MCF 10A (cell line): ENCODE measurements at regions of chr10 and their contacts with region 1.

Region 1: DNA sequence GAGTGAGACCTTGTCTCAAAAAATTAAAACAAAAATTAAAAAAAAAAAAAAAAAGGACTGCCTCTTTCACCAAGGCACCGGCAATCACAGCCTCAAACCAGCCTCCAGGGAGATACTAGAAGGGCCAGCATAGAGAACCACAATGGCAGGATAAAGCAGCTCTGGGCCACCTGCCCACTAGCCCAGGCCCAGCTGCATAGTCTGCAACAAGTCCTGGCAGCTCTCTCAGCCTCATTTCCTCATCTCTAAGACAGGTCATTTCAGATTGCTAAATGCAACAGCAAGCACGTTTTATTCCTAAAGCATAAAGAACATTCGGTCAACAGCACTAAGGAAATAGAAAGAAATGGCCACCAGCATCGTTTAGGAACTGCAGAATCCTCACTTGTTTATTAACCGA is 28.8 kb downstream of the XPNPEP1 start:
- DNase-seq: peak; percentile 90
- H3K4me3 Mint-ChIP-seq: peak overlapping the region; percentile 31
- H3K27ac Mint-ChIP-seq: peak overlapping the region; percentile 83
- H3K4me1 Mint-ChIP-seq: peaks cover 38% of the 10 kb centered on the region
- H3K27me3 Mint-ChIP-seq: no peaks in the 10 kb centered on the region
- CTCF ChIP-seq: no peak

Region 2: DNA sequence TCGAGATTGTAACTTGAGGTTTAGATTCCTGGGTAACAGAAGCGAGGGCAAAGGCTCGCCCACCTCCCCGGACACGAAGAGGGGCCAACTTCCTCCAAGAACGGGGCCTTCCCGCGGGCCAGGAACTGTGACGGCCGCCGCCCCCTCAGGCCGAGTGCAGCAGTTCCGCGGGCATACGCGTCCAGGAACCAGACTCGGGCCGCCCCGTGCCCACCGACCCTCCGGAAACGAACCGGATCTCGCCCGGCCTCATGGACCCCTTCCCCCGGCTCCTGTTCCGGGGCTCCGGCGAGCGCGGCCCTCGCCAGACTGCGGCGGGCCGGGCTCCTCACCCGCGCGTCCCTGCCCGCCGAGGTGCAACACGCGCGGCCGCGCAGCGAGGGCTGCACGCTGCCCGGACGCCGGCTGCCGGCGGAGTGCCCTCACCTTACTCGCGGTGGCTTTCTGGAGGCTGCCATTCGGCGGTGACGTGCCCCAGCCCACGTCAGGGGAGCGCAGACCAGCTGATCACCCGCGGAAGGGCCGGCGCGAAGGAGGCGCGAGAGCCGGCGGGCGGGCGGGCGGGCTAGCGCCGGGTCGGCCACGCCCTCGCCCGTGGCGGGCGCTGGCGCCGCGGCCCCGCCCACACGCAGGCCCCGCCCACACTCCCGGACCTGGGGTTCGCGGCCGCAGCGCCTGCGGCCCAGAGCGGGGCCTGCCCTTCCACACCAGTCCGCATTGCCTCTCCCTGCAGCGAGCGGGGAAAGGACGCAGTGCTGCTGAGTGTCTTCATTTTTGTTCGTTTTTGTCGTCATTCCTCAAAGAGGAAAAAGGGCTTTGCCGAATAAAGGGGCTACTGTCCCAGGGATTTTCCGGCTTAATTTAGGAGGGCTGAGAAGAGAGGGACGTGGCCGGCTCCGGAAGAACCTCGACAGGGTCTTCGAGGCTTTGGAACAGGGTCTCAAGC is 28.7 kb after region 1 on chr10 and contains the start of gene XPNPEP1:
- CTCF ChIA-PET with region 1: interaction called, 3 read pairs
- POLR2A ChIA-PET with region 1: interaction called, 122 read pairs
- intact Hi-C with region 1: no loop called
- DNase-seq: peak; percentile 79
- H3K4me3 Mint-ChIP-seq: peak within 1 kb of the TSS; percentile 67
- H3K27ac Mint-ChIP-seq: peak within 1 kb of the TSS; percentile 91
- H3K4me1 Mint-ChIP-seq: peaks cover 34% of the 10 kb centered on the region
- H3K27me3 Mint-ChIP-seq: no peaks in the 10 kb centered on the region
- CTCF ChIP-seq: no peak
- total RNA-seq, gene XPNPEP1: 51.6 and 52.1 TPM in 2 replicates

Region 3: GRCh38 chr10:110007701-110008517 is 113.4 kb after region 1 on chr10 and contains the start of gene ADD3:
- CTCF ChIA-PET with region 1: interaction called, 8 read pairs
- POLR2A ChIA-PET with region 1: interaction called, 23 read pairs
- intact Hi-C with region 1: no loop called
- DNase-seq: peak; percentile 84
- H3K4me3 Mint-ChIP-seq: no peak within 1 kb of the TSS
- H3K27ac Mint-ChIP-seq: peak within 1 kb of the TSS; percentile 19
- H3K4me1 Mint-ChIP-seq: peaks cover 17% of the 10 kb centered on the region
- H3K27me3 Mint-ChIP-seq: no peaks in the 10 kb centered on the region
- CTCF ChIP-seq: no peak
- total RNA-seq, gene ADD3: 11.2 and 14.5 TPM in 2 replicates

Region 4: GRCh38 chr10:110016039-110016438 is 121.5 kb after region 1 on chr10:
- CTCF ChIA-PET with region 1: interaction called, 22 read pairs
- POLR2A ChIA-PET with region 1: interaction called, 3 read pairs
- intact Hi-C with region 1: no loop called
- DNase-seq: peak; percentile 28
- H3K4me3 Mint-ChIP-seq: no peak overlapping the region
- H3K27ac Mint-ChIP-seq: no peak overlapping the region
- H3K4me1 Mint-ChIP-seq: peaks cover 12% of the 10 kb centered on the region
- H3K27me3 Mint-ChIP-seq: no peaks in the 10 kb centered on the region
- CTCF ChIP-seq: peak; percentile 41